ENCODE measurements at regions of chr2 and their contacts with region 1.

Region 1: GRCh38 chr2:219475697-219476651 is 22.7 kb upstream of the GMPPA start:
- DNase-seq: peak in 1 of 2 experiments; percentile 95
- H3K4me3 ChIP-seq: peak overlapping the region; percentile 29 to 57 (median 36); a peak in 7 of 8 replicates
- H3K27ac ChIP-seq: no peak overlapping the region
- H3K4me1 ChIP-seq: peaks cover 0 to 13% (median 6%) of the 10 kb centered on the region in 4 experiments; a peak in 5 of 7 replicates
- H3K27me3 ChIP-seq: 0 out of 7 replicates have a peak, but pooled peaks cover 0 to 2% (median 0%) of the 10 kb centered on the region in 4 experiments
- CTCF ChIP-seq: peak in 2 of 3 experiments; percentile 87 to 93; a peak in 3 of 4 replicates
- EP300 ChIP-seq: no peak
- POLR2A ChIP-seq: no peak; a peak in 1 of 3 replicates
- RAD21 ChIP-seq: peak; percentile 75 to 82

Region 2: DNA sequence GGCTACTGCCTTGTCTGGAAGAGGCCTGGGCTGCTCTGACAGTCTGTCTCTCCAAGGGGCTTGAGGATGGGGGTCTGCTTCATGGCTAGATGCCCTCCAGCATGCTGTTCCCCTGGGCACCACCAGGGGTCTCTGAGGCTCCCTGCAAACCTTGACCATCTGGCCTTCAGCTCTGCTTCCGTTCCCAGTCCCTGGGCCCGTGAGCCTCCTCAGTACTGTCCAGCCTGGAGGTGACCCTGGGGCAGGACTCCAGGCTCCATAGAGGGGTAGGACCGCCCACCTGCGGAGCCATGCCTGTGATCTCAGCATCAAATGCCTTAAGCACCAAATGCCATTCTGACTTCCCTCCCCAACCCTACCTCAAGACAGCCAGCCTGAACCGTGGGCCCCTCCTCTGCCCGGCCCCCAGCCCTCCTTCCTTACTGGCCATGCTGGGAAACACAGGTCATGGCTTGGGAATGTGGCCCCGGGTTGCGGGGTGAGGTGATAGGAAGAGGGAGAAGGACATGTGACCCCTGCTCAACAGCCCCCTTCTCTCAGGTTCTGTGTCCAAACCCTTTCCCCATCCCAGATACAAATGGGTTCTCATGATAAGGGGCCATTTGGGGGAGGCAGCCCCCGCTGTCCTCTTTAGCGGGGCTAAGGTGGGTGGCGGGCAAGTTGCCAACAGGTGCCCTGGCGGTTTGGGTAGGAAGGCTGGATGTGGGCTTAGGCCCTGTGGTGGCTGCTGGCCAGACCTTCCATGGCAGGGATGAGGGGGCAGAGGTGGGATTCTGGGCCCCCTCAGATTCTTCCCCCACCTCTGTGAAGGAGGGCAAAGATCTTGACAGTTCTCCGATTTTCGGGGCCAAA is 16.3 kb before region 1 on chr2:
- CTCF ChIA-PET with region 1: interaction called, 7,248 read pairs
- POLR2A ChIA-PET with region 1: interaction called, 17 read pairs
- DNase-seq: peak in 1 of 2 experiments; percentile 94
- H3K4me3 ChIP-seq: peak overlapping the region in 1 of 4 experiments; percentile 46; a peak in 1 of 8 replicates
- H3K27ac ChIP-seq: no peak overlapping the region
- H3K4me1 ChIP-seq: peaks cover 9 to 23% (median 21%) of the 10 kb centered on the region in 4 experiments
- H3K27me3 ChIP-seq: no peaks in the 10 kb centered on the region; a peak in 1 of 7 replicates
- CTCF ChIP-seq: peak in 2 of 3 experiments; percentile 88 to 98; a peak in 3 of 4 replicates
- EP300 ChIP-seq: no peak
- POLR2A ChIP-seq: no peak
- RAD21 ChIP-seq: peak; percentile 68 to 75

Region 3: GRCh38 chr2:219490186-219490585 is 14.2 kb after region 1 on chr2:
- CTCF ChIA-PET with region 1: interaction called, 7,248 read pairs
- POLR2A ChIA-PET with region 1: interaction called, 13 read pairs
- DNase-seq: no peak
- H3K4me3 ChIP-seq: no peak overlapping the region
- H3K27ac ChIP-seq: no peak overlapping the region
- H3K4me1 ChIP-seq: peaks cover 6 to 30% (median 22%) of the 10 kb centered on the region in 4 experiments
- H3K27me3 ChIP-seq: peaks cover 6 to 32% (median 21%) of the 10 kb centered on the region in 4 experiments
- CTCF ChIP-seq: peak in 2 of 3 experiments; percentile 65 to 74; a peak in 3 of 4 replicates
- EP300 ChIP-seq: no peak
- POLR2A ChIP-seq: no peak
- RAD21 ChIP-seq: peak; percentile 32 to 52